ENCODE measurements at regions of chr16 and their contacts with region 1.

Region 1: DNA sequence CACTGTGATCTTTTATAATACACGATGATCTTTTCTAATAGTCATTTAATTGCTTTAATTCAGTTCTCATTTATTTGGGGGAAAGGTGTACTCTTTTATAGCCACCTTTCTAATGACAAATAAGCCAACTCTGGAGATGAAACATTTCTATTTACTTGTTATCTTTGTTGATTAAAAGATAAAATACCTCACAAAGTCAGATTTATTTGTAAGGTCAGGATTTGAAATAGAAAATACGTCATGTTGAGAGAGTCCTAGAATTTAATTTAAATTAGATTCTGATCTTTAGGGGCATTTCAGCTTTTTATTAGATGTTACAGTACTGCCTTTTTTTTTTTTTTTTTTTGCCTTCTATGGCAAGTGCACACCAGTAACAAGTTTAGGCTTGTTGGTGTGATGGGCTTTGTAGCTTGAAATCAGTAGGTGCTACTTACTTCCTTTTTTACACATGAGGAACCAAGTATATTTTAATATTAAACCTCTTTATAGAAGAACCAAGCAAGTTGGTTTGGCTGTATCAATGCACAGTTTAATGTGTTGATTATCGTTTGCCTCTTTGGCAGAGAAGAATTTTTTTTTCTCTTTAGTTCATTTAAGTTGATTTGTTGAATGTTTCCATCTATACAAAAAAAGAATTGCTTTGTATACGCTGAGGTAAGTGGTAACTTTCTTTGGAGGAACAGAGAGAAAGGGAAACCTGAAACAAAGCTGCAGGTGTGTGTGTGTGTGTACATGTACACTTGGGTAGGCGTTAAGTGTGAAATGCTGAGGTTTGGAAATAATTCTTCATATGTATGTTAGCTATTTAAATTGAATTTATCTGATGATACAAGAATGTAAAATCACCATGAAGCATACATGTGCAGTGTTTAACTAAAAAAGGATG is 15.6 kb downstream of the RBL2 start:
- DNase-seq: no peak
- ATAC-seq: peak; percentile 46 to 50
- H3K4me3 Mint-ChIP-seq: peak overlapping the region; percentile 79 to 95 (median 84)
- H3K27ac Mint-ChIP-seq: peak overlapping the region; percentile 73 to 97 (median 90)
- H3K4me1 Mint-ChIP-seq: peaks cover 24 to 78% (median 54%) of the 10 kb centered on the region in 4 donors
- H3K27me3 Mint-ChIP-seq: no peaks in the 10 kb centered on the region

Region 2: GRCh38 chr16:53465606-53466280 is 15.9 kb after region 1 on chr16:
- POLR2A ChIA-PET with region 1: interaction called, 113 read pairs
- DNase-seq: no peak
- ATAC-seq: no peak
- H3K4me3 Mint-ChIP-seq: peak overlapping the region in 6 of 10 donors; percentile 9 to 79 (median 68)
- H3K27ac Mint-ChIP-seq: peak overlapping the region in 9 of 10 donors; percentile 6 to 92 (median 87)
- H3K4me1 Mint-ChIP-seq: peaks cover 13 to 67% (median 52%) of the 10 kb centered on the region in 4 donors
- H3K27me3 Mint-ChIP-seq: no peaks in the 10 kb centered on the region

Region 3: DNA sequence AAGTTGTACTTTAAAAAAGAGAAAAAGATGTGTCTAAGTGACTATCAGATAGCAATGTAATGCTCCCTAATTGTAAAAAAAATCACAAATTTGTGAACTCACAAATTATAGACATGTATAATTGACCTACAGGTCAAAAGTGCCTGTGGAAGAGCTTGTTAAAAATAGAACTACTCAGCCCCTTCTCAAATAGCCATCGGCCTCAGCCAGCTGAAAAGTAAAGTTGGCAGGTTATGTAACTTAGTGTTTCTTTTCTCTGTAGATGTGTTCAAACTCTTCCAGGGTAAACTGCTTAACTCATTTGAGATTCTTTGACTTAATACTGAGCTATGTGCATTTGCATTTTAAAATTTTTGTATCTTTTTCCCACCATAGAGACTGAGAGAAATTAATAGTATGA is 39.9 kb after region 1 on chr16:
- POLR2A ChIA-PET with region 1: interaction called, 152 read pairs
- DNase-seq: no peak
- ATAC-seq: no peak
- H3K4me3 Mint-ChIP-seq: peak overlapping the region in 6 of 10 donors; percentile 3 to 58 (median 30)
- H3K27ac Mint-ChIP-seq: peak overlapping the region; percentile 14 to 95 (median 83)
- H3K4me1 Mint-ChIP-seq: peaks cover 24 to 58% (median 46%) of the 10 kb centered on the region in 4 donors
- H3K27me3 Mint-ChIP-seq: no peaks in the 10 kb centered on the region